Right lobe of liver (tissue), 6 donors: ENCODE measurements at regions of chr1 and their contacts with region 1.

Region 1: DNA sequence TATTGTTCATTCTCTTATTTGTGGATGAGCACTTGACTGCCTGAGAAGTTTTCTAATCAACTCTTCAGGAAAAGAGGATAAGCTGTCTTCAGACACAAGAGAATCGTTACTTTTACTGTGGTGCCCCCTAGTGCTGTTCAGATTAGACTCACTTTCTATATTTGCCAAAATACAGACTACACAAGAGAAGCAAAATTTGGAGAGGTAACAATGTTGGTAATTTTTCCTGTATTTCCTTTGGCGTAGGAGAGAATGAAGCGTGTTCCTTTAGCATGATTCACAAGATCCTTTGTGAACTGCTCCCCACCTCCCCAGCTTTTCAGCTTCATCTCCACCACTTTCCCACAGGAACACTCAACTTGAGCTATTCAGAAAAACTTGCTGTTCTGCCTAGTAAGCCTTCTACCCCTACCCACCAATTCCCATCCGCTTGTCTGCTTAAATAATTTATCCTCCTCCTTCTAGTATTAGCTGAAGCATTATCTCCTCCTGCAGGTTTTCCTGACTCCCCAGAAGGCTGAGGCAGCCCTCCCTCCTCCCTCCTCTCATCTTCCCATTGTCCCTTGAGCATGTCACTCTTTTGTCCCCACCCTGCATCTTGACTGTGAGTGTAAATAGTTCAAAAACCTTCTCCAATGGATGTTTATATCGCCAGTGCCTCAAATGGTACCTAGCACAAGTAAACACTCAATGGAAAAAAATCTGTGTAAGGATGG is 4.5 kb downstream of the TNFSF4 start:
- DNase-seq: no peak
- ATAC-seq: peak; percentile 86 to 88 (median 88)
- H3K4me3 ChIP-seq: no peak overlapping the region
- H3K27ac ChIP-seq: no peak overlapping the region
- H3K4me1 ChIP-seq: no peaks in the 10 kb centered on the region
- H3K27me3 ChIP-seq: no peaks in the 10 kb centered on the region
- CTCF ChIP-seq: peak; percentile 66 to 84 (median 68)
- POLR2A ChIP-seq: no peak

Region 2: DNA sequence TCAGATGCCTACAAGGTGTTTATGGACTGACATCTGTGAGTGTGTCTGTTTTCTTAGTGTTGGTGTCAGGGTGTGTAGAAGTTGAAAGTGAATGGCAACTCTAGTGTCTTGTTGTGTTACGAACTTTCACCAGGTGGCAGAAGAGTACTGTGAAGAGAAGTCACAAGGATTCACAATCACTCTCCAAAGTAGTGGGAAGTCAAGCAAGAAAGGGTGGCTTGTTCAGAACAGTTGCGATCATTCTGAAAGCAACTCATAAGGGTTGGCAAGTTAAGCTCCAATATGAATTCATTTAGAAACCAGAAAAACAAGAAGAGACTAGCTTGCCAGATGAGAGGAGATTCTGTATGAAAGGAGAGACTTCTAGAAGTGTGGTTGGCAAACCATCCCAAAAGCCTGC is 457.6 kb before region 1 on chr1:
- intact Hi-C with region 1: loop called in 1 of 2 experiments (anchors 10 kb)
- DNase-seq: no peak
- ATAC-seq: peak; percentile 77 to 84 (median 81)
- H3K4me3 ChIP-seq: no peak overlapping the region
- H3K27ac ChIP-seq: no peak overlapping the region
- H3K4me1 ChIP-seq: peaks cover 0 to 5% (median 0%) of the 10 kb centered on the region in 4 donors
- H3K27me3 ChIP-seq: no peaks in the 10 kb centered on the region
- CTCF ChIP-seq: peak; percentile 49 to 64 (median 62)
- POLR2A ChIP-seq: no peak

Region 3: GRCh38 chr1:172826096-172826743 is 376.4 kb before region 1 on chr1:
- intact Hi-C with region 1: loop called (anchors 10 kb)
- DNase-seq: no peak
- ATAC-seq: peak; percentile 90 to 92 (median 91)
- H3K4me3 ChIP-seq: peak overlapping the region in 1 of 3 donors; percentile 3
- H3K27ac ChIP-seq: peak overlapping the region in 1 of 3 donors; percentile 10
- H3K4me1 ChIP-seq: no peaks in the 10 kb centered on the region
- H3K27me3 ChIP-seq: no peaks in the 10 kb centered on the region
- CTCF ChIP-seq: peak; percentile 48 to 81 (median 62)
- POLR2A ChIP-seq: no peak